OCI-LY7 (cell line): ENCODE measurements at regions of chr6 and their contacts with region 1.

Region 1: GRCh38 chr6:56532766-56533551 is 109.7 kb downstream of the DST start:
- DNase-seq: peak; percentile 67
- H3K4me3 ChIP-seq: peak overlapping the region; percentile 23
- H3K27ac ChIP-seq: peak overlapping the region; percentile 83
- H3K4me1 ChIP-seq: peaks cover 63% of the 10 kb centered on the region
- CTCF ChIP-seq: no peak

Region 2: GRCh38 chr6:56193846-56194245 is 339.1 kb before region 1 on chr6:
- CTCF ChIA-PET with region 1: no interaction called
- POLR2A ChIA-PET with region 1: no interaction called
- intact Hi-C with region 1: no loop called
- DNase-seq: no peak
- H3K4me3 ChIP-seq: no peak overlapping the region
- H3K27ac ChIP-seq: no peak overlapping the region
- H3K4me1 ChIP-seq: no peaks in the 10 kb centered on the region
- CTCF ChIP-seq: no peak

Region 3: GRCh38 chr6:56521454-56521853 is 11.5 kb before region 1 on chr6:
- CTCF ChIA-PET with region 1: interaction called, 3 read pairs
- POLR2A ChIA-PET with region 1: interaction called, 15 read pairs
- intact Hi-C with region 1: no loop called
- DNase-seq: no peak
- H3K4me3 ChIP-seq: no peak overlapping the region
- H3K27ac ChIP-seq: no peak overlapping the region
- H3K4me1 ChIP-seq: peaks cover 32% of the 10 kb centered on the region
- CTCF ChIP-seq: no peak

Region 4: GRCh38 chr6:56914798-56915658 is 382.1 kb after region 1 on chr6:
- CTCF ChIA-PET with region 1: no interaction called
- POLR2A ChIA-PET with region 1: no interaction called
- intact Hi-C with region 1: no loop called
- DNase-seq: no peak
- H3K4me3 ChIP-seq: no peak overlapping the region
- H3K27ac ChIP-seq: no peak overlapping the region
- H3K4me1 ChIP-seq: no peaks in the 10 kb centered on the region
- CTCF ChIP-seq: no peak